Activated B cell treated with CpG ODN at 0.5 μM for 24 hours (primary cell): ENCODE measurements at regions of chr14 and their contacts with region 1.

Region 1: GRCh38 chr14:105045710-105046326 is 19.4 kb downstream of the GPR132 start:
- DNase-seq: peak; percentile 93
- ATAC-seq: peak; percentile 90
- H3K4me3 Mint-ChIP-seq: peak overlapping the region; percentile 46
- H3K27ac Mint-ChIP-seq: peak overlapping the region; percentile 59
- H3K4me1 Mint-ChIP-seq: peaks cover 15% of the 10 kb centered on the region
- H3K27me3 Mint-ChIP-seq: no peaks in the 10 kb centered on the region
- CTCF ChIP-seq: peak; percentile 97

Region 2: GRCh38 chr14:104768437-104769323 is 277.1 kb before region 1 on chr14:
- CTCF ChIA-PET with region 1: interaction called, 9 read pairs
- POLR2A ChIA-PET with region 1: interaction called, 3 read pairs
- intact Hi-C with region 1: loop called (anchors 1 kb)
- DNase-seq: peak; percentile 90
- ATAC-seq: peak; percentile 98
- H3K4me3 Mint-ChIP-seq: no peak overlapping the region
- H3K27ac Mint-ChIP-seq: no peak overlapping the region
- H3K4me1 Mint-ChIP-seq: peaks cover 3% of the 10 kb centered on the region
- H3K27me3 Mint-ChIP-seq: no peaks in the 10 kb centered on the region
- CTCF ChIP-seq: no peak

Region 3: GRCh38 chr14:104957146-104958113 is 88.4 kb before region 1 on chr14:
- CTCF ChIA-PET with region 1: no interaction called
- POLR2A ChIA-PET with region 1: no interaction called
- intact Hi-C with region 1: no loop called
- DNase-seq: no peak
- ATAC-seq: no peak
- H3K4me3 Mint-ChIP-seq: no peak overlapping the region
- H3K27ac Mint-ChIP-seq: no peak overlapping the region
- H3K4me1 Mint-ChIP-seq: no peaks in the 10 kb centered on the region
- H3K27me3 Mint-ChIP-seq: peaks cover 9% of the 10 kb centered on the region
- CTCF ChIP-seq: no peak

Region 4: GRCh38 chr14:104976198-104977007 is 69.4 kb before region 1 on chr14:
- CTCF ChIA-PET with region 1: interaction called, 71 read pairs
- POLR2A ChIA-PET with region 1: no interaction called
- intact Hi-C with region 1: loop called (anchors 1 kb)
- DNase-seq: peak; percentile 86
- ATAC-seq: peak; percentile 85
- H3K4me3 Mint-ChIP-seq: peak overlapping the region; percentile 69
- H3K27ac Mint-ChIP-seq: no peak overlapping the region
- H3K4me1 Mint-ChIP-seq: peaks cover 14% of the 10 kb centered on the region
- H3K27me3 Mint-ChIP-seq: peaks cover 21% of the 10 kb centered on the region
- CTCF ChIP-seq: no peak

Region 5: DNA sequence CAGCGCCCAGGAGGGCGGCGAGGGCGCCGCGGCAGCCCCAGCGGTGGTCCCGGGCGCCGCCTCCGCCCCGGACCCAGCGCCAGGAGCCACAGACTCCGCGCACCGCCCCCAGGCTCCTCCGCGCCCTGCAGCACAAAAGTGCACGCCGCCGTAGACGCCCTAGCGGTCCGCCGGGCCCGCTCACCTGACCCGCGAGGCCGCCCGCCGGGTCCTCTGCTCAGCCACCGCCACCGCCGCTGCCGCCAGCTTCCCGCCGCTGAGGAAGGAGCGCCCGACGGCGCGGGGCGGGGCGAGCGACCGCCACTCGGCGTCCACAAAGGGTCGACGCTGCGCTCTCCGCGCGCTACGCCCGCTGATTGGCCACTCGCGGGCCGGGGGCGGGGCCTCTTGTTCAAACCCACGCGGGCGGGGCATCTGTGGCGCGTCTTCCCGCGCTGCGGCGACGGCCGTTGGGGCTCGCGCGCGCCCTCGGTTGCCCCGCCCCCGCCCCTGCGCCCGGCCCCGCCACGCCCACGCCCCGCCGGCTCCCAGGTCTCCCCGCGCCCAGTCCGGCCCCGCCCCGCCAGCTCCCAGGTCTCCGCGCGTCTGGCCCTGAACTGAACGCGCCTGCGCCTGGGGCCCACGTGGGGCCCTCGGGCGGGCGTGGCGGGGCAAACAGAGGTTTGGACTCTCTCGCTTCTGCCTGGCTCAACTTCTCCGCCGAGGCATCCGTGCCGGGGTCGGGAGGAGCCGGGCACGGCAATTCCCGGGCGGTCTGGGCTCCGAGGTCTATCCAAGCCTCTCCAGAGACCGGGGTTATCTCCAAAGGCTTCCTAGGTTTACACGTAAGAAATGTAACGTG is 24.8 kb before region 1 on chr14 and contains the start of gene CDCA4:
- CTCF ChIA-PET with region 1: interaction called, 9 read pairs
- POLR2A ChIA-PET with region 1: interaction called, 13 read pairs
- intact Hi-C with region 1: loop called (anchors 1 kb)
- DNase-seq: peak; percentile 97
- ATAC-seq: peak; percentile 84
- H3K4me3 Mint-ChIP-seq: peak within 1 kb of the TSS; percentile 92
- H3K27ac Mint-ChIP-seq: peak within 1 kb of the TSS; percentile 94
- H3K4me1 Mint-ChIP-seq: peaks cover 62% of the 10 kb centered on the region
- H3K27me3 Mint-ChIP-seq: no peaks in the 10 kb centered on the region
- CTCF ChIP-seq: no peak
- total RNA-seq, gene CDCA4: 11.7 and 13.6 TPM in 2 replicates

Region 6: GRCh38 chr14:105065280-105066228 is 19.7 kb after region 1 on chr14 and contains the start of gene GPR132:
- CTCF ChIA-PET with region 1: interaction called, 12 read pairs
- POLR2A ChIA-PET with region 1: interaction called, 18 read pairs
- intact Hi-C with region 1: loop called (anchors 2 kb)
- DNase-seq: peak; percentile 66
- ATAC-seq: peak; percentile 73
- H3K4me3 Mint-ChIP-seq: peak within 1 kb of the TSS; percentile 90
- H3K27ac Mint-ChIP-seq: peak within 1 kb of the TSS; percentile 89
- H3K4me1 Mint-ChIP-seq: peaks cover 88% of the 10 kb centered on the region
- H3K27me3 Mint-ChIP-seq: no peaks in the 10 kb centered on the region
- CTCF ChIP-seq: no peak
- total RNA-seq, gene GPR132: 43.4 and 48.5 TPM in 2 replicates